Natural killer cell (primary cell): ENCODE measurements at regions of chr7 and their contacts with region 1.

Region 1: DNA sequence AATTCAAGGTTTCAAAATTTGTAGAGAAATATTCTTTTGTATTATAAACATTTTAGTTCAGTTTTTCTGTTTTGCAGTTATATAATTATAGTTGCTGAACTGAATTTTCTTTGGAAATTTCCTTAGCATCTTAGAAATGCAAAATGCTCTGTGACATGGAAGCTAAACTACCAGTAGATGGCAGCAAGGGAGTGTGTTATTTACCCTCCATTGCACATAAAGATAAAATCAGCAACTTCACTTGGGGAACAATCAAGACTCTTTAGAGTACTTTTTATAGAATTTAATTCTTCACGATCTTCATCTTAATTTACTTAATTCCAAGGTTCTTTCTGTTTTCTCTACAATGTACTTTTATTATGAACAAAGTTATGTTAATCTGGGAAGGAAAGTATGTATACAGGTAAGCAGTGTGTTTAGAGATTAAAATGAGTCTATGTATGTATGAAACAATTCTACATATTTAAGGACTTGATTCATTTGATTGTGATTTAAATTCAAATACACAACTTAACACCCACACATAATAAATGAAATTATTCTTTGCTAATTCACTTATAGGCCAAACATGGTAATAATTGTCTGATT is 404.2 kb downstream of the THSD7A start:
- DNase-seq: peak in 1 of 2 donors; percentile 41
- ATAC-seq: no peak
- H3K4me3 ChIP-seq: no peak overlapping the region
- H3K4me3 Mint-ChIP-seq: no peak overlapping the region
- H3K27ac ChIP-seq: no peak overlapping the region
- H3K27ac Mint-ChIP-seq: no peak overlapping the region
- H3K4me1 ChIP-seq: no peaks in the 10 kb centered on the region
- H3K4me1 Mint-ChIP-seq: no peaks in the 10 kb centered on the region
- H3K27me3 ChIP-seq: no peaks in the 10 kb centered on the region
- H3K27me3 Mint-ChIP-seq: no peaks in the 10 kb centered on the region
- CTCF ChIP-seq: no peak

Region 2: GRCh38 chr7:12322284-12322902 is 894.6 kb after region 1 on chr7:
- intact Hi-C with region 1: loop called (anchors 5 kb)
- DNase-seq: peak in 1 of 2 donors; percentile 69
- ATAC-seq: no peak
- H3K4me3 ChIP-seq: no peak overlapping the region
- H3K4me3 Mint-ChIP-seq: no peak overlapping the region
- H3K27ac ChIP-seq: no peak overlapping the region
- H3K27ac Mint-ChIP-seq: no peak overlapping the region
- H3K4me1 ChIP-seq: no peaks in the 10 kb centered on the region
- H3K4me1 Mint-ChIP-seq: no peaks in the 10 kb centered on the region
- H3K27me3 ChIP-seq: no peaks in the 10 kb centered on the region
- H3K27me3 Mint-ChIP-seq: no peaks in the 10 kb centered on the region
- CTCF ChIP-seq: peak; percentile 83